A673 (cell line): ENCODE measurements at regions of chr10 and their contacts with region 1.

Region 1: DNA sequence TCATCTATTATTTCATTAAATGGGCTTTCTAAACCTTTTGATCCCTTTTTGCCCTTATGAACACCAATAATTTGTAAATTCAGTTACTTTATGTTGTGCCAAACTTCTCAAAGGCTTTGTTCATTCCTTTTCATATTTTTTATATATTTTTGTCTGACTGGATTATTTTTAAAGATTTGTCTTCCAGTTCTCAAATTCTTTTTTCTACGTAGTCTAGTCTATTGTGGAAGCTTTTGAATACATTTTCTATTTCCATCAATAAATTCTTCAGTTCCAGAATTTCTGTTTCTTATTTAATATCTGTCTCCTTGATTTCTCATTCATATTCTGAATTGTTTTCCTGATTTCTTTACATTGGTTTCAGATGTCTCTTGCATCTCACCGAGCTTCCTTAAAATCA is 108.2 kb downstream of the CTNNA3 start:
- DNase-seq: no peak
- H3K4me3 ChIP-seq: no peak overlapping the region
- H3K27ac ChIP-seq: no peak overlapping the region
- H3K4me1 ChIP-seq: no peaks in the 10 kb centered on the region
- H3K27me3 ChIP-seq: no peaks in the 10 kb centered on the region
- CTCF ChIP-seq: no peak

Region 2: DNA sequence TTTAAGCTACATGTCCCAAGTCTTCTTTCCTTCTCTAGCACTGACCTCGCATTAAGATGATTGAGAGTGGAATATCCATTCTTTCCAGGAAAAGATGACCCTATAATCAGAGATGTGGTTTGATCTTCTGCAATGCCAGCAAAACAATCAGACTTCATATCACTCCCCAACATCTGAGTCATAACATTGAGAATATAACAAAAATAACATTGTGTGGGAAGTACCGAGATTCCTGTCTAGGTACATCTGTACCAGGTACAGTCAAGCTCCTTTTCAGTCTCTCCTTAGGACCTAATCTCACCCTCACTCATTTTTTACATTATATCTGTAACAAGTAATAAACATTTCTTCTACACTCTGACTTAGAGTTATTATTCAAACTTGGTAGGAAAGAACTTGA is 460.3 kb before region 1 on chr10:
- CTCF ChIA-PET with region 1: no interaction called
- POLR2A ChIA-PET with region 1: interaction called, 13 read pairs
- intact Hi-C with region 1: no loop called
- DNase-seq: no peak
- H3K4me3 ChIP-seq: no peak overlapping the region
- H3K27ac ChIP-seq: no peak overlapping the region
- H3K4me1 ChIP-seq: no peaks in the 10 kb centered on the region
- H3K27me3 ChIP-seq: no peaks in the 10 kb centered on the region
- CTCF ChIP-seq: no peak